Heart left ventricle (tissue), 16 donors: ENCODE measurements at regions of chr11 and their contacts with region 1.

Region 1: GRCh38 chr11:2122222-2123085 is 16.7 kb downstream of the IGF2 start:
- DNase-seq: peak in 2 of 5 donors; percentile 16 to 42
- ATAC-seq: peak in 1 of 4 donors; percentile 20
- H3K4me3 ChIP-seq: no peak overlapping the region
- H3K27ac ChIP-seq: no peak overlapping the region
- H3K4me1 ChIP-seq: no peaks in the 10 kb centered on the region
- H3K27me3 ChIP-seq: peaks cover 0 to 21% (median 6%) of the 10 kb centered on the region in 9 donors
- CTCF ChIP-seq: no peak
- POLR2A ChIP-seq: no peak

Region 2: DNA sequence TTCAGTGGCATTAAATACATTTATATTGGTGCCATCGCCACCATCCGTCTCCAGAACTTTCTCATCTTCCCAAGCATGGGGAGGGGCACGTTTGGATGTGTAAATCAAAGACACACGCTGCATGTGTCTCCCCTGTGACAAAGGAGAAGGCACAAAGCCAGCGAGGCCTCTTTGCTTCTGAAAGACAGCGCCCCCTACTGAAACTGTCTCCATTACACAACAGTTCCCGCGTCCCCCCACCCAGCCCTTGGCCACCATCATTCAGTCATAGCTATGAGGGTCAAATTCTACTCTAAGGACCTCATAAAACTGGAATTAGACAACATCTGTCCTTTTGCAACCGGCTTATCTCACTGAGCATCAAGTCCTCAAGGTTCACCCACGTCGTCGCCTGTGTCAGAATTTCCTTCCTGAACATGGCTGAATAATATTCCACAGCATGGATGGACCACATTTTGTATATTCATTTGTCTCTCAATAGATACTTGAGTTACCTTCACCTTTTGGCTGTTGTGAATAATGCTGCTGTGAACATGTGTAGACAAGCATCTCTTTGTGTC is 48.1 kb before region 1 on chr11:
- intact Hi-C with region 1: loop called in 1 of 10 experiments (anchors 5 kb)
- DNase-seq: peak in 1 of 5 donors; percentile 17
- ATAC-seq: no peak
- H3K4me3 ChIP-seq: no peak overlapping the region
- H3K27ac ChIP-seq: no peak overlapping the region
- H3K4me1 ChIP-seq: no peaks in the 10 kb centered on the region
- H3K27me3 ChIP-seq: peaks cover 0 to 15% (median 0%) of the 10 kb centered on the region in 9 donors
- CTCF ChIP-seq: peak in 1 of 12 donors; percentile 9
- POLR2A ChIP-seq: no peak

Region 3: DNA sequence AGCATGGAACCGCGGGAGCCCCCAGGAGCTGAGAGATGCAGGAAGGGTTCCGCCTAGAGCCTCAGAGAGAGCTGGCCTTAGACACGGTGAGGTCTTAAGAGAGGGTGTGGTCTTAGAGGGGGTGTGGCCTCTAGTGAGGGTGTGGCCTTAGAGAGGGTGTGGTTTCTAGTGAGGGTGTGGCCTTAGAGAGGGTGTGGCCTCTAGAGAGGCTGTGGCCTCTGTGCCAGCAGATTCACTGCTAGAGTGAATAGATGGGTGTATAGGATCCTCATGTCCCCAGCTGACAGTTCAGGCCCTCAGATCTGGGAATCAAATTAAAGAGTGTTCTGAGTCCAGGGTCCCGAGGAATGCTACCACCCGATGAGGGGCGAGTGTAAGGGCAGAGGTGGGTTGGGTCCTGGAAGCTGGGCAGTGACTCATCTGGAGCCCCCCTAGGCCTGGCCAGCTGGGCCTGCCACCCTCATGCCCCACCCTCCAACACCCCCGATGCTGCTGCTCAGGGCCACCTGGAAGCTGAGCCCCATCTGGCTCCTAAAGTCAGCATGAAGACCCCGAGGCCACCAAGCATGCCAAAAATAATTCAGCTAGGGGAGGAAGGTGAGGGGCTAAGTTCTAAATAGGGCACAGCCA is 32.8 kb before region 1 on chr11:
- intact Hi-C with region 1: loop called in 1 of 10 experiments (anchors 5 kb)
- DNase-seq: peak in 1 of 5 donors; percentile 11
- ATAC-seq: no peak
- H3K4me3 ChIP-seq: no peak overlapping the region
- H3K27ac ChIP-seq: no peak overlapping the region
- H3K4me1 ChIP-seq: peaks cover 0 to 25% (median 8%) of the 10 kb centered on the region in 12 donors
- H3K27me3 ChIP-seq: no peaks in the 10 kb centered on the region
- CTCF ChIP-seq: no peak
- POLR2A ChIP-seq: no peak